ENCODE measurements at regions of chr16 and their contacts with region 1.

Region 1: GRCh38 chr16:52068447-52069074 is 478.4 kb downstream of the TOX3 start:
- DNase-seq: peak; percentile 41
- H3K4me3 ChIP-seq: no peak overlapping the region
- H3K27ac ChIP-seq: no peak overlapping the region
- H3K4me1 ChIP-seq: peaks cover 0 to 15% (median 5%) of the 10 kb centered on the region in 4 donors
- H3K27me3 ChIP-seq: no peaks in the 10 kb centered on the region
- CTCF ChIP-seq: peak in 3 of 5 experiments; percentile 24 to 45 (median 27)
- EP300 ChIP-seq: no peak
- POLR2A ChIP-seq: no peak

Region 2: DNA sequence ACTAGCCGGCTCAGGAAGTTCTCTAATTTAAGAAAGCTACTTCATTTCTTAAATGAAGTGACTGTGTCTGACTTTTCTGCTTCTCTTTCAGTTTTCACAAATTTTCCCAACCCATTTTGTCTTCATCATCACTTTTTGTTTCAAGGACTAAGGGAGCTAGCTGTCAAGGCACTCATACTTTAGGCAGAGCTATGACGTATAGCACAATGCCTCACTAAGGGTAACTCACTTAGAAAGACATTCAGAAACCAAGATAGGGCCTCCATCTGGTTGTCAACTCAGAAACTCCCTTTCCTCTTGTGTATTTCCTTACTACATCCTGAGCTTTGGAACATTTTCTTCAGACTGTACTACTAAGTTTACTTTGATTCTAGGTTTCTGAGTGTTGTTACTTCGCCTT is 80.4 kb after region 1 on chr16:
- in situ Hi-C with region 1: no loop called
- intact Hi-C with region 1: no loop called
- DNase-seq: no peak
- H3K4me3 ChIP-seq: no peak overlapping the region
- H3K27ac ChIP-seq: no peak overlapping the region
- H3K4me1 ChIP-seq: no peaks in the 10 kb centered on the region
- H3K27me3 ChIP-seq: no peaks in the 10 kb centered on the region
- CTCF ChIP-seq: no peak
- EP300 ChIP-seq: no peak
- POLR2A ChIP-seq: no peak

Region 3: GRCh38 chr16:52912565-52913173 is 844.1 kb after region 1 on chr16:
- in situ Hi-C with region 1: loop called in 3 of 4 experiments (anchors 25 kb)
- intact Hi-C with region 1: no loop called
- DNase-seq: peak; percentile 75
- H3K4me3 ChIP-seq: no peak overlapping the region
- H3K27ac ChIP-seq: no peak overlapping the region
- H3K4me1 ChIP-seq: no peaks in the 10 kb centered on the region
- H3K27me3 ChIP-seq: no peaks in the 10 kb centered on the region
- CTCF ChIP-seq: peak; percentile 65 to 81 (median 77)
- EP300 ChIP-seq: no peak
- POLR2A ChIP-seq: no peak

Region 4: DNA sequence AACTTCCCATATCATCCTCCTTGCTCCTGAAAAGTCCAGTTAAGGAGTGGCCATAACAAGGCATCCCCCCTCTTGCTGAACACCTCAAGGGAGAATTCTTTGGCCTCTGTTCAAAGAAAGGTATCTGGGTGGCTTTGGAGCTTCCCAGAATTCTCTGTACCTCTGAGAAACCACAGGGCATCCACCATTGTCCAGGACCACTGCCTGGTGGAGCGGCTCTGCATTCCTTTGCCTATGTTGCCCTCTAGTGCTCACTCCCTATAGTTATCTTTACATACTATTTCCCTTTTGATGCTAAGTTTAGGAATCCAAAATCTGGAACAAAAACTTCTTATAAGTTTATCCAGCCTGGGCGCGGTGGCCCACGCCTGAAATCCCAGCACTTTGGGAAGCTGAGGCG is 953.8 kb after region 1 on chr16:
- in situ Hi-C with region 1: loop called in 1 of 4 experiments (anchors 25 kb)
- intact Hi-C with region 1: no loop called
- DNase-seq: peak; percentile 33
- H3K4me3 ChIP-seq: no peak overlapping the region
- H3K27ac ChIP-seq: no peak overlapping the region
- H3K4me1 ChIP-seq: no peaks in the 10 kb centered on the region
- H3K27me3 ChIP-seq: no peaks in the 10 kb centered on the region
- CTCF ChIP-seq: peak; percentile 47 to 64 (median 49)
- EP300 ChIP-seq: no peak
- POLR2A ChIP-seq: no peak

Measured in transverse colon (tissue), 4 donors.